ENCODE measurements at regions of chr6 and their contacts with region 1.

Region 1: GRCh38 chr6:108260809-108261569 is at the start of gene SNX3:
- DNase-seq: peak; percentile 91
- H3K4me3 Mint-ChIP-seq: peak within 1 kb of the TSS; percentile 73
- H3K27ac Mint-ChIP-seq: peak within 1 kb of the TSS; percentile 77
- H3K4me1 Mint-ChIP-seq: peaks cover 24% of the 10 kb centered on the region
- H3K27me3 Mint-ChIP-seq: peaks cover 2% of the 10 kb centered on the region
- total RNA-seq, gene SNX3: 85.0 to 86.3 TPM

Region 2: GRCh38 chr6:108277821-108278220 is 16.8 kb after region 1 on chr6:
- CTCF ChIA-PET with region 1: interaction called, 3 read pairs
- POLR2A ChIA-PET with region 1: interaction called, 10 read pairs
- DNase-seq: no peak
- H3K4me3 Mint-ChIP-seq: no peak overlapping the region
- H3K27ac Mint-ChIP-seq: no peak overlapping the region
- H3K4me1 Mint-ChIP-seq: no peaks in the 10 kb centered on the region
- H3K27me3 Mint-ChIP-seq: peaks cover 7% of the 10 kb centered on the region

Region 3: GRCh38 chr6:108288742-108289141 is 27.8 kb after region 1 on chr6:
- CTCF ChIA-PET with region 1: no interaction called
- POLR2A ChIA-PET with region 1: interaction called, 66 read pairs
- DNase-seq: peak; percentile 28
- H3K4me3 Mint-ChIP-seq: no peak overlapping the region
- H3K27ac Mint-ChIP-seq: peak overlapping the region; percentile 5
- H3K4me1 Mint-ChIP-seq: peaks cover 33% of the 10 kb centered on the region
- H3K27me3 Mint-ChIP-seq: peaks cover 1% of the 10 kb centered on the region

Region 4: DNA sequence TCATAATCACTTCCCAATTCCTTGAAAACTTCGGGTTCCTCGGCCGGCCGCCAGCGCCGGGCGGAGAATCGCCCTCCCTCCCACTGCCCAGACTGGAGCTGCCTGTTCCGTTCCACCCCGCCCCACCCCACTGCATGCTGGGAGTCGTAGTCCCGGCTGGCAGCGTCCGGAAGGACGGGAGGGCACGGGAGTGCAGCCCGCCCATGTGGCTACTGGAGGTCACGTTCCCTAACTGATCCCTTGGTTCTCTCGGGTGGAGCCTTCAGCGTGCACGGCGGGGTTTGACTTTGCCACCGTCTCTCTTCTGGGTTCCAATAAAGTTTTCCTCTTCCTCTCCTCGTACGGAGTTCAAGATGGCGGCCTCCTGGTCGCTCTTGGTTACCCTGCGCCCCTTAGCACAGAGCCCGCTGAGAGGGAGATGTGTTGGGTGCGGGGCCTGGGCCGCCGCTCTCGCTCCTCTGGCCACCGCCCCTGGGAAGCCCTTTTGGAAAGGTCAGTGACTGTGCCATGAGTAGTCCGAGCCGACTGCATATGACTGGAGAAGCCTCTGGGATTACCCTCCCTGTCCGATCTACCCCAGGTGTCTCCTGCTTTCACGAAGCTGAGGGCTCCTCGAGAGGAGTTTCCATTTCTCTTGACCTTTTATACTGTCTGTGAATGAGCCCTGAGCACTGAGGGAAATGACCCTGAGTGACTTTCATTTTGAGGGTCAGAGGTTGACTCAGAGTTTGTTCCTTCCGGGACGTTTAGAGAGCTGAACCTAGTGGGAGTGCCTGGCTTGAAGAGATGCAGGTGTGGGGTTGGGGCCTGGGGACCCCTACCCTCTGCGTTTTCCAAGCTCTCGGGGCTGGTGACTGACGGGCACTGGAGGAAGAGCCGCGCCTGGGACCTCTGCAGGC is 34.0 kb after region 1 on chr6 and contains the start of gene AFG1L:
- CTCF ChIA-PET with region 1: interaction called, 7 read pairs
- POLR2A ChIA-PET with region 1: interaction called, 66 read pairs
- DNase-seq: peak; percentile 90
- H3K4me3 Mint-ChIP-seq: peak within 1 kb of the TSS; percentile 93
- H3K27ac Mint-ChIP-seq: peak within 1 kb of the TSS; percentile 97
- H3K4me1 Mint-ChIP-seq: peaks cover 25% of the 10 kb centered on the region
- H3K27me3 Mint-ChIP-seq: no peaks in the 10 kb centered on the region
- total RNA-seq, gene AFG1L: 4.5 to 4.7 TPM

Region 5: GRCh38 chr6:108312605-108313004 is 51.6 kb after region 1 on chr6:
- CTCF ChIA-PET with region 1: interaction called, 5 read pairs
- POLR2A ChIA-PET with region 1: interaction called, 14 read pairs
- DNase-seq: no peak
- H3K4me3 Mint-ChIP-seq: no peak overlapping the region
- H3K27ac Mint-ChIP-seq: no peak overlapping the region
- H3K4me1 Mint-ChIP-seq: peaks cover 11% of the 10 kb centered on the region
- H3K27me3 Mint-ChIP-seq: no peaks in the 10 kb centered on the region

Measured in activated CD4-positive, alpha-beta memory T cell treated with anti-CD3 and anti-CD28 coated beads, Interleukin-2, amount 10 ng/mL, durations not matched to agents 7 days and 5 days (primary cell).